AG04449 (cell line): ENCODE measurements at regions of chr1 and their contacts with region 1.

Region 1: DNA sequence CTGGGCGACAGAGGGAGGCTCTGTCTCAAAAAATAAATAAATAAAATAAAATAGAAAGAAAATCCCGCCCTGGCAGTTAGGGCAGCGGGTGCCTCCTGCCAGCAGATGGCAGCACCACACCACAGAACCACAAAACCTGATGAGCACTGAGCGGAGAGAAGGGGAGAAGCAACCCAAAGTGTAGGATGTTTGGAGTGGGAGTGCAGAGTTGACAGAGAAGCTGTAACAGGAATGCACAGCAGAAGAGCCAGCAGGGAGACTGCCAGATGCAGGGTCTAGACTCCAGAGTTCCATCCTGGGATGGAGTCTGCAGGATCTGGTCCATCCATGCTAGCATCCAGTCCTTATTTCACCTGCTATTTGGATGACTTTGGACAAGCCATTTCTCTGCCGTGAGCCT is 29.7 kb upstream of the KIRREL1 start:
- DNase-seq: no peak
- H3K4me3 ChIP-seq: no peak overlapping the region
- CTCF ChIP-seq: peak; percentile 75

Region 2: DNA sequence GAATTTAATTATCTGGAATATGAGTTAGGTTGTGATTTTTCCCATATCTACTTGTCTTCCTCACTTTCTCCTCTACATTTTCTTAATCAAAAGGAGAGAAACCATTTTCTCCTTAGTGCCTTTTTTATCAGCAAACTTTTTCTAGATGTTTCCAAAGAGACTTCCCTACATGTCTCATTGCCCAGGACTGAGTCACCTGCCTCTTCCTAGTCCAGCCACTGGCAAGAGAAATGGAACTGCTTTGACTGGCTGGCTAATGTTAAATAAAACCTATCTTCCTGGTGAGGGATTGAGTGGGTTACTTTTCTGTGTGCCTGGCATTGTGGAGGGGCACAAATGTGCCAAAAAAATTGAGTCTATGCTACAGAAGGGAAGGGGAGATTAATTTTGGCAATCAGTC is 70.0 kb before region 1 on chr1:
- CTCF ChIA-PET with region 1: no interaction called
- POLR2A ChIA-PET with region 1: no interaction called
- DNase-seq: no peak
- H3K4me3 ChIP-seq: no peak overlapping the region
- CTCF ChIP-seq: no peak

Region 3: DNA sequence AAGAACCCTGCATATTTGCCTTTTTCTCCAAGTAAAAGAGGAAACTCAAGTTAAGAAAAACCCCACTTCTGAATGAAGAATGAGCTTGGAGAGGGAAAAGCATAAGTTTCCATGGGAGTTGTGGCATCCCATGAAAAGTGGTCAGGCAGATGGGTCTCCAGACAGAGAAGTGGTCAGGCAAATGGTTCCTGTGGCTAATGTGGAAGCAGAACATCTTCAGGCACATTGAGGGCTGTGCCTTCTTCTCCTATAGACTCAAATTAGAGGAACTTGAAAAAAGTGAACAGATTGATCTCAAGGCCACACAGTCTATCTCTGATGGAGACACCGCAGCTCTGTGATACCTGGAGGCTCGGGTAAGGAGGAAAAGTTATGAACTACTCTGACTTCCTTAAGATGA is 26.0 kb before region 1 on chr1:
- CTCF ChIA-PET with region 1: interaction called, 12 read pairs
- POLR2A ChIA-PET with region 1: no interaction called
- DNase-seq: no peak
- H3K4me3 ChIP-seq: no peak overlapping the region
- CTCF ChIP-seq: no peak

Region 4: DNA sequence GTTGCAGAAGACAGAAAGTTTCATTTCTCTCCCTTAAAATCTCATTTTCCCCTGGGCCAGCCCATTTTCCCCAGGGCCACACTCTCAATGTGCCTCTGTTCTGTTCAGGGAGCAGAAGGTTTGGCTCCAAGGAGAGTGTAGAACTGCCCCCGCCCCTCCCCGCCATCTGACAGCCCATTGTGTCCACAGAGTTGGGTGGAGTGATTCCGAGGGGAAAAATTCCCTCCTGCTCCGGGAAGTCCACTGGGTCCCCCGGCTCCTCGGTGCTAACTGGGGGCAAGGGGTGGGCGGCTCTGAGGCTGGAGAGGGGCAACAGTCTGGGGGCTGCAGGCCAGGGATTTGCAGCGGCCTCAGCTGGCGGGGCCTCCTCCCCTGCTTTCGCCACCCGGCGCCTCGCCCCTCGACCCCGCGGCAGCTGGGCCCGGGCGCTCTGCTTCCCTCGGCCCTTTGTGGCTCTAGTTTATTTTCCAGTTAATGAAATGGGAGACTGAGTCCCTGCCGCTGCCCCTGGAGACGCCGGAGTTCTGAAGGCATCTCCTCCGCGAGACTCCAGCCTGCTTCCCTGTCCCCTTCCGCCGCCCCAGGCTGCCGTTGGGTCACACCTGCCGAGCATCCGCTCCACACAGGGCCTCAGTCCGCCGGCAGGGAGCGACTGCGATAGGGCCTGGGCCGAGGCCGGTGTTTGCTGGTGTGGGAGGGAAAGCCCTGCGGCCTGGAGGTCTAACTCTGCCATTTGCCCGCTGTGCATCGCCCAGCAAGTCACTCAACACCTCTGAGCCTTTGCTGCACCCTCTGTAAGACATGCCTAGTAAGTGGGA is 15.1 kb after region 1 on chr1:
- CTCF ChIA-PET with region 1: interaction called, 401 read pairs
- POLR2A ChIA-PET with region 1: no interaction called
- DNase-seq: no peak
- H3K4me3 ChIP-seq: no peak overlapping the region
- CTCF ChIP-seq: peak; percentile 4

Region 5: GRCh38 chr1:158087320-158087927 is 123.7 kb after region 1 on chr1:
- CTCF ChIA-PET with region 1: interaction called, 140 read pairs
- POLR2A ChIA-PET with region 1: no interaction called
- DNase-seq: peak; percentile 10
- H3K4me3 ChIP-seq: no peak overlapping the region
- CTCF ChIP-seq: peak; percentile 83

Region 6: DNA sequence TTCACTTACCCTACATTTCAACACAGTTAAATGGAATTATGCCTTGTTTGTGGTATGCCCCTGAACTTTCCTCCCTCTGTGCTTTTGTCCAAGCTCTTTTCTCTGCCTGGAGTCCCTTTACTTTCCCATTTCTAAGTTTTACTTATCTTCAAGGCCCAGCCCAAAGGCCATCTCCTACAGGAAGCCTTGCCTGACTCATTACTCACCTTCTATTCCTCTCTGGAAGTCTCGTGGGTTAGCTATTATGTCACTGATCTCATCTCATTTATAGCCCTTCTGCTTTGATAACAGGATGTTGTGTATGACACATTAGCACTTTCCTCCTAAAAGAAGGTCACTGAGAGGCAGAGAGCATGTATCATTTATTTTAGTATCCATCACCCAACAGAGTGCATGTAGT is 138.2 kb after region 1 on chr1:
- CTCF ChIA-PET with region 1: interaction called, 140 read pairs
- POLR2A ChIA-PET with region 1: no interaction called
- DNase-seq: no peak
- H3K4me3 ChIP-seq: no peak overlapping the region
- CTCF ChIP-seq: no peak

Region 7: GRCh38 chr1:158140764-158141192 is 177.1 kb after region 1 on chr1:
- CTCF ChIA-PET with region 1: interaction called, 14 read pairs
- POLR2A ChIA-PET with region 1: no interaction called
- DNase-seq: no peak
- H3K4me3 ChIP-seq: no peak overlapping the region
- CTCF ChIP-seq: no peak

Region 8: GRCh38 chr1:159071970-159072582 is 1108.4 kb after region 1 on chr1:
- CTCF ChIA-PET with region 1: interaction called, 13 read pairs
- POLR2A ChIA-PET with region 1: no interaction called
- DNase-seq: peak; percentile 36
- H3K4me3 ChIP-seq: no peak overlapping the region
- CTCF ChIP-seq: peak; percentile 44